ENCODE measurements at regions of chr11 and their contacts with region 1.

Region 1: GRCh38 chr11:125568970-125569914 is at the start of gene EI24:
- DNase-seq: peak; percentile 94 to 95
- ATAC-seq: peak; percentile 96
- H3K4me3 ChIP-seq: peak within 1 kb of the TSS; percentile 96
- H3K27ac ChIP-seq: peak within 1 kb of the TSS; percentile 98
- H3K4me1 ChIP-seq: peaks cover 21% of the 10 kb centered on the region
- H3K27me3 ChIP-seq: no peaks in the 10 kb centered on the region
- CTCF ChIP-seq: peak; percentile 76
- total RNA-seq, gene EI24: 52.9 to 140 (median 93.6) TPM

Region 2: GRCh38 chr11:125605417-125605816 is 36.2 kb after region 1 on chr11:
- intact Hi-C with region 1: loop called in 1 of 2 experiments (anchors 5 kb)
- DNase-seq: no peak
- ATAC-seq: no peak
- H3K4me3 ChIP-seq: no peak overlapping the region
- H3K27ac ChIP-seq: no peak overlapping the region
- H3K4me1 ChIP-seq: no peaks in the 10 kb centered on the region
- H3K27me3 ChIP-seq: no peaks in the 10 kb centered on the region
- CTCF ChIP-seq: no peak

Region 3: DNA sequence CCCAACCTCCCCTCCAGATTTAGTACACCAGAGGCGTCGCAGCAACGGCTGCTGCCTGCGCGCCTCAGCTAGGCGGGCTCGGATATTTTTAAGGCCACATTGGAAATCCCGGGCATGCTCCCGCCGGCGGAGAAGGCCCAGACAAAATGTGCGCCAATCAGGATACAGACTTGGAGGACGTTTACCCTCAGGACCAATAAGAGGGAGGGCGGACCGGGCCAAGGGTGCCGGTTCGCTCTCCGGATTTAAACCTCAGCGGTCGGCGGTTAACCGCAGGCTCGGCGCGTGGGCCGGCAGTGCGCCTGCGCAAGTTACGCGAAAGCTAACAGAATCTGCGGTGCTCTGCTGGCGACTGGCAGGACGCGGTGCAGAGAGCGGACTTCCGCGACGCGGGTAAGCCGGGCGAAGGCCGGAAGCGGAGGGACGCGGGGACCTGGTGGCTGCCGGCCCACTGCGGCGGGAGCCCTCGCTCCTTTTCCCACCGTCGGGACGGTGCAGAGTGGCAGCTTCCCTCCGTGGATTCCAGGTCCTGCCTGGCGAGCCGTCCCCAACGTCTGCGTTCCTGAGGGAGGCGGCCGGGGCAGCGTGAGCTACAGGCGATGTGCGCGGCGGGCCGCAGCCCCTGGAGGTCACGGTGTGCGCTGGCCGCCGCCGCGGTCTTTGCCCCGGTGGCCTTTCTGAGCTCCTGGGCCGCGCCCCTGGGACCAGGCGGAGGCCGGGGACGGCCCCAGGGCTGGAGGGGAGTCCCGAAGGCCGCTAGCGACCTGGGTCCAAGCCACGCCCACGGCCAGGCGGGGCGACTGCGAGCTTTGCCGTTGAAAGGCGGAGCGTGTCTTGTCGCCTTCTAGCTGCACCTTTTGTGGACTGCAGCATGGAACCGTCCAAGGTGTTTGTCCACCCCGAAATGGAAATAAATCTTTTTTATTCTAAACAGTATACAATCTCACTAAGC is 318.4 kb after region 1 on chr11 and contains the start of gene HYLS1:
- intact Hi-C with region 1: loop called in 1 of 2 experiments (anchors 10 kb)
- DNase-seq: peak; percentile 95 to 96
- ATAC-seq: peak; percentile 98 to 99 (median 99)
- H3K4me3 ChIP-seq: peak within 1 kb of the TSS; percentile 88
- H3K27ac ChIP-seq: peak within 1 kb of the TSS; percentile 93
- H3K4me1 ChIP-seq: peaks cover 8% of the 10 kb centered on the region
- H3K27me3 ChIP-seq: no peaks in the 10 kb centered on the region
- CTCF ChIP-seq: peak; percentile 21
- total RNA-seq, gene HYLS1: 1.8 to 4.0 (median 3.1) TPM

Measured in psoas muscle (tissue), 8 donors.